ENCODE measurements at regions of chr13 and their contacts with region 1.

Region 1: DNA sequence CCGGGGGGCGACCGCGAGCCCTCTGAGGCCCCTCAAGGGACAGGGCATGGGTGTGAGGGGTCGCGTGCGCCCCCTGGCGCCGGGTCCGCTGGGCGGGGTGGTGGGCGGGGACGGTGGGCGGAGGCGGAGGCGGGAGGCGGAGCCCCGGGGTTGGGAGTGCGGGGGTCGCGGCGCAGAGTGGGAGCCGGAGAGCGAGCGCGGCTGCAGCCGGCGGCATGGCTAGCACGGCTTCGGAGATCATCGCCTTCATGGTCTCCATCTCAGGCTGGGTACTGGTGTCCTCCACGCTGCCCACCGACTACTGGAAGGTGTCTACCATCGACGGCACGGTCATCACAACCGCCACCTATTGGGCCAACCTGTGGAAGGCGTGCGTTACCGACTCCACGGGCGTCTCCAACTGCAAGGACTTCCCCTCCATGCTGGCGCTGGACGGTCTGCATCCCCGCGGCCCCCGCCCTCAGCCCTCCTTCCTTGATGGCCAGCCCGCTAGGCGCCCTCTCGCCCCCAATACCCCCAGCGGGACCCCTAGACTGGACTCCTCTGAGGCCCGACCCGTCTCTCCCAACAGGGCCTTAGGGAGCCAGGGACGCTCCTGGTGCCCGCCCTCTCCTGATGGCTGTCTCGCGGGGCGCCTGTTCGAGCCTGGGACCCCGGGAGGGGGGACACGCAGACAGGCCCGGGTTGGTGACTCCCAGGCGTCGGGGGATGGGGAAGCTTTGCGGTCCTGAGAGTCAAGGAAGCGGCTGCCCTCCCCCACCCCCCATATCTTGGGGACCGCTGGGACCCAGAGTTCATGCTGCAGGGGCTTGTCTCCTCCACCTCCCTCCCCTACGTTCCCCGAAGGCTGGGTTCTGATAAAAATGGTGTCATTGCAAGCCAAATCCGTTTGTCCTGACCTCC is at the start of gene CLDN10:
- DNase-seq: no peak
- ATAC-seq: no peak
- total RNA-seq, gene CLDN10: not detected

Region 2: DNA sequence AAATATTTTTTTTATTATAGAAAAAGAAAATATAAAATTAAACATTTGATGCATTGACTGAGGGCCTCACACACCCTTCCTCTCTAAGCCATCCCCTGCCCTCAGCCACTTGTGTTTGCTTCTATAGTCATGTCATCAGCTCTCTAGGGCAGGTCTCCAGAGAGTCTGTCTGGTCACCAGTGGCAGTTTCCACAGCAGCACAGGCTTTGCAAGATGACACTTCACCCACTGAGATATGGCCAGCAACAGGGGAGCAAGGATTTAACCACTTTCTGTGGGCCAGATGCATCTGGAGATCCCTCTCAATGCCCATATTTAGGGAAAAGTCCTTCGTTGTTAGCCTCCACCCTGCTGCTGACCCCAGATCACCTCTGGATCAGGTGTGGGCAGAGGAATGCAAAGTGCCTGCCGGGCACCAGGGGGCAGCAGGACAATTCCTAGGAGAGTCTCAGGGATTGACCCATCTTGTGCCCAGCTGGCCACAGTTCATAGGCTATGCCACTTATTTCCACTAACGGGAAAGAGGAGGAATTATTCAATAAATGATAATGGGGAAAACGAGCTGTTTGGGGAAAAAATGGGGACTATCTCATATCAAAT is 256.4 kb before region 1 on chr13:
- intact Hi-C with region 1: no loop called
- DNase-seq: no peak
- ATAC-seq: no peak

Region 3: GRCh38 chr13:95509521-95510310 is 43.1 kb before region 1 on chr13:
- intact Hi-C with region 1: loop called (anchors 1 kb)
- DNase-seq: no peak
- ATAC-seq: no peak

Region 4: GRCh38 chr13:96844616-96845015 is 1291.8 kb after region 1 on chr13:
- intact Hi-C with region 1: no loop called
- DNase-seq: no peak
- ATAC-seq: no peak